H1 (cell line): ENCODE measurements at regions of chr11 and their contacts with region 1.

Region 1: DNA sequence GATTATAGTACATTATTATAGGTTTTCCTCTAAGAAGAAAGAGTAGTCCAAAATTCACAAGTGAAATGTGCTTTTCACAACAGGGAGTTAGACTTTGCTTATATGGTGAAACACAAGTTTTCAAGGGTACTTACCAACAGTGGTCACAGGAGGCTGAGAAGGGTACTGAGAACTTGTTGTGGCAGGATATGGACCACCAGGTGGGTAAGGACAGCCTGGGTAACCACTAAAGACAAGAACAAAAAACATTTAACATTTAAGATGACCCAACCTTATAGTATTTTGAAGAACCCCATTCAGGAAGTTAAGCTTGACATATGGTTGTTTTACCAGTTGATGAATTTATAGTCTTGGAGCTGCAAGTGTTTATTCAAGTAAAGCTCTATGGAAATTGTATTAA is 24.4 kb downstream of the TSG101 start:
- DNase-seq: no peak
- H3K4me3 ChIP-seq: no peak overlapping the region
- H3K27ac ChIP-seq: no peak overlapping the region
- H3K4me1 ChIP-seq: no peaks in the 10 kb centered on the region
- H3K27me3 ChIP-seq: no peaks in the 10 kb centered on the region
- CTCF ChIP-seq: no peak
- EP300 ChIP-seq: no peak
- POLR2A ChIP-seq: no peak
- RAD21 ChIP-seq: no peak

Region 2: GRCh38 chr11:18352581-18352980 is 149.8 kb before region 1 on chr11:
- CTCF ChIA-PET with region 1: no interaction called
- POLR2A ChIA-PET with region 1: no interaction called
- DNase-seq: no peak
- H3K4me3 ChIP-seq: no peak overlapping the region
- H3K27ac ChIP-seq: no peak overlapping the region
- H3K4me1 ChIP-seq: no peaks in the 10 kb centered on the region
- H3K27me3 ChIP-seq: no peaks in the 10 kb centered on the region
- CTCF ChIP-seq: no peak
- EP300 ChIP-seq: no peak
- POLR2A ChIP-seq: no peak
- RAD21 ChIP-seq: no peak

Region 3: GRCh38 chr11:18463439-18463838 is 38.9 kb before region 1 on chr11:
- CTCF ChIA-PET with region 1: no interaction called
- POLR2A ChIA-PET with region 1: no interaction called
- DNase-seq: no peak
- H3K4me3 ChIP-seq: no peak overlapping the region
- H3K27ac ChIP-seq: no peak overlapping the region
- H3K4me1 ChIP-seq: no peaks in the 10 kb centered on the region
- H3K27me3 ChIP-seq: no peaks in the 10 kb centered on the region
- CTCF ChIP-seq: no peak
- EP300 ChIP-seq: no peak
- POLR2A ChIP-seq: no peak
- RAD21 ChIP-seq: no peak

Region 4: GRCh38 chr11:18526521-18527296 is 24.4 kb after region 1 on chr11 and contains the start of gene TSG101:
- CTCF ChIA-PET with region 1: interaction called, 10 read pairs
- POLR2A ChIA-PET with region 1: interaction called, 3 read pairs
- DNase-seq: peak; percentile 69 to 96
- H3K4me3 ChIP-seq: peak within 1 kb of the TSS; percentile 86 to 96 (median 91)
- H3K27ac ChIP-seq: peak within 1 kb of the TSS; percentile 97
- H3K4me1 ChIP-seq: peaks cover 0 to 3% (median 0%) of the 10 kb centered on the region in 4 experiments; a peak in 2 of 7 replicates
- H3K27me3 ChIP-seq: no peaks in the 10 kb centered on the region
- CTCF ChIP-seq: no peak
- EP300 ChIP-seq: 0 out of 3 replicates have a peak, but pooled peaks of 1 of the 2 experiments have one; percentile 4
- POLR2A ChIP-seq: peak; percentile 81 to 94
- RAD21 ChIP-seq: no peak
- total RNA-seq, gene TSG101: 50.8 and 58.2 TPM in 2 replicates

Region 5: GRCh38 chr11:18578975-18579598 is 76.7 kb after region 1 on chr11:
- CTCF ChIA-PET with region 1: no interaction called
- POLR2A ChIA-PET with region 1: no interaction called
- DNase-seq: no peak
- H3K4me3 ChIP-seq: no peak overlapping the region
- H3K27ac ChIP-seq: no peak overlapping the region
- H3K4me1 ChIP-seq: no peaks in the 10 kb centered on the region
- H3K27me3 ChIP-seq: no peaks in the 10 kb centered on the region
- CTCF ChIP-seq: no peak
- EP300 ChIP-seq: no peak
- POLR2A ChIP-seq: no peak
- RAD21 ChIP-seq: no peak